Activated CD8-positive, alpha-beta T cell treated with anti-CD3 and anti-CD28 coated beads for 36 hours (primary cell): ENCODE measurements at regions of chr1 and their contacts with region 1.

Region 1: DNA sequence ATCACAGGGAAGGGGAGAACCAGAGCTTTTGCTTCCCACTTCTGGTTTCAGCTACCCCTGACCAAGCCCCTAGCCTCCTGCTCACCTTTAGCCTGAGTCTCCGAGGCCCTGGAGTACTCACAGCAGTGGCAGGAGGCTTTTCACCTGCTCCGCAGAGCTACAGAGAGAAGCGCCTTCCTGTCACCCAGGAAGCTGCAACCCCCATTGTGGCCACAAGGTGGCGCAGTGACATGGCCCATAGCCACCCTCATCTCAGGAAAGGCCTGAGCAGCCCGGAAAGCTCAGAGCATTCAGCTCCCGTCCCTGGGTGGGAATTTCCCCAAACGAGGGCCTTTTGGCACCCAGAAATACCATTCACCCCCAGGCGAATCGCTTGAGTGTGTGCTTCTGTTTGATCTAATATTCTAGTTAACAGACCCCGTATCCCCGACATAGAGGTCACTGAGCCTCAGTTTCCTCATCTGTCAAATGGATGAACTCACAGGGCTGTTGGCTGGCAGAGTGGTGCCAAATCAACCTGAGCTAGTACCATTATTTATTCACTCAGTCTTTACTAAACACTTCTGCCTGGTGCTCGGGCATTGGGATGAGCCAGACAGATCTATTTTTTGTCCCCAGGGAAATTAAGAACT is 25.3 kb downstream of the A3GALT2 start:
- DNase-seq: peak; percentile 95
- ATAC-seq: peak; percentile 95
- H3K4me3 Mint-ChIP-seq: no peak overlapping the region
- H3K27ac Mint-ChIP-seq: no peak overlapping the region
- H3K4me1 Mint-ChIP-seq: peaks cover 7% of the 10 kb centered on the region
- H3K27me3 Mint-ChIP-seq: no peaks in the 10 kb centered on the region
- CTCF ChIP-seq: peak; percentile 96

Region 2: DNA sequence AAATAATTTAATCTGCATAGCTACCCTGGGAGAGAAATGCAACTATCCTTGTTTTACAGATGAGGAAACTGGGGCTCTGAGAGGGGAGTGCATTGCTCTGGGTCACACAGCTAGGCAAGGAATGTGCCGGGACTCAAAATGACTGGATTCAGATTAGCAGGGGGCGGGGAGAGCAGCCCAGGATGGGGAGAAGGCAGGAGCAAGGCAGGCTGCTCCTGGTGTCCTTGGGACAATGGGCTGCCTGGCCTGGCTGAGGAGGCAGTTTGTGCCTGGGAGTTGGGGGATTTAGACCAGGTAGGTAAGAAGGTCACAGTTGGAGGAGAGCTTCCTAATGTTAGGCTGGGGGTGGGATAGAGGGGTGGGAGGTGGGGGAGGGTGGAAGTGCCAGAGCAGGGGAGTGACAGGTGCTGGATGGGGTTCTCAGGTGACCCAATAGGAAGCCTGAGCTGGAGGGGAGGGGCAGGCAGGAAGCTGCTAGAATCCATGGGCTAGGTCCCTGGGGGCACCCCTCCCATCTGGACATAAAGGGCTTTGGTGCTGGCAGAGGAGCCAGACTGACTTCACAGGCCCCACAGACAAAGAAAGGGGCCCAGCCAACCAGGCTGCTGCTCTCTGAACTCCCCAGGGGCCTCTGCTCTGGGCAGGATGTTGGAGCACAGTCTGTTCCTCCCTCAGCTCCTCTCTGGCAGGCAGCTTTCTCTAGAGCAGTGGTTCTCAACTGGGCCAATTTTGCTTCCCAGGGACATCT is 142.7 kb before region 1 on chr1:
- CTCF ChIA-PET with region 1: no interaction called
- POLR2A ChIA-PET with region 1: no interaction called
- intact Hi-C with region 1: no loop called
- DNase-seq: no peak
- ATAC-seq: peak; percentile 34
- H3K4me3 Mint-ChIP-seq: no peak overlapping the region
- H3K27ac Mint-ChIP-seq: peak overlapping the region; percentile 14
- H3K4me1 Mint-ChIP-seq: no peaks in the 10 kb centered on the region
- H3K27me3 Mint-ChIP-seq: no peaks in the 10 kb centered on the region
- CTCF ChIP-seq: no peak

Region 3: DNA sequence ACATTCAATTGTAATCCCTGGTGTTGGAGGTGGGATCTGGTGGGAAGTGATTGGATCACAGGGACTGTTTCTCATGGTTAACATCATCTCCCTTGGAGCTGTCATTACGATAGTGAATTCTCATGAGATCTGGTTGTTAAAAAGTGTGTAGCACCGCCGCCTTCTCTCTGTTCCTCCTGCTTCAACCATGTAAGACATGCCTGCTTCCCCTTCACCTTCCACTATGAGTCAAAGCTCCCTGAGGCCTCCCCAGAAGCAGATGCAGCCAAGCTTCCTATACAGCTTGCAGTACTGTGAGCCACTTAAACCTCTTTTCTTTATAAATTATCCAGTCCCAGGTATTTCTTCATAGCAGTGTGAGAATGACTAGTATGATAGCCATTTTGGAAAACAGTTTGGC is 83.6 kb before region 1 on chr1:
- CTCF ChIA-PET with region 1: no interaction called
- POLR2A ChIA-PET with region 1: no interaction called
- intact Hi-C with region 1: no loop called
- DNase-seq: no peak
- ATAC-seq: no peak
- H3K4me3 Mint-ChIP-seq: no peak overlapping the region
- H3K27ac Mint-ChIP-seq: no peak overlapping the region
- H3K4me1 Mint-ChIP-seq: no peaks in the 10 kb centered on the region
- H3K27me3 Mint-ChIP-seq: peaks cover 19% of the 10 kb centered on the region
- CTCF ChIP-seq: no peak

Region 4: DNA sequence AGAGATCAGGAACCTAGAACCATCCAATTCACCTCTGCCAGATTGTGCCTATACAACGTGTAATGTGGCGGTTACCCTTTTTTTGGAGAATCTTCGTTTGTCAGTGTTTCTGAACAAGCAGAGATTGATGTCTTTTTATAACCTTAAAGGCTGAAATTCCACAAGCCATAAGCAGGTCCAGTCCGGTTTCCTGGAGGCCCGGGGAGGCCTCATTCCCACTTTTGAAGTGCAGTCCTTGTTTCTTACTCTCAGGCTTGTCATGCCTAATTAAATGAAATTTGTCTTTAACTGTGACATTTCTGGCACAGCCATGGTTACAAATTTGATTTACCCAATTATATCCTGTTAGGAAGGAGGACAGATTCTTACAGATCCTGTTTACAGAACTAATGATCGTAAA is 11.5 kb before region 1 on chr1:
- CTCF ChIA-PET with region 1: interaction called, 11 read pairs
- POLR2A ChIA-PET with region 1: no interaction called
- intact Hi-C with region 1: no loop called
- DNase-seq: no peak
- ATAC-seq: no peak
- H3K4me3 Mint-ChIP-seq: no peak overlapping the region
- H3K27ac Mint-ChIP-seq: no peak overlapping the region
- H3K4me1 Mint-ChIP-seq: no peaks in the 10 kb centered on the region
- H3K27me3 Mint-ChIP-seq: no peaks in the 10 kb centered on the region
- CTCF ChIP-seq: no peak

Region 5: GRCh38 chr1:33329601-33330305 is 34.2 kb after region 1 on chr1:
- CTCF ChIA-PET with region 1: interaction called, 10 read pairs
- POLR2A ChIA-PET with region 1: no interaction called
- intact Hi-C with region 1: no loop called
- DNase-seq: no peak
- ATAC-seq: no peak
- H3K4me3 Mint-ChIP-seq: no peak overlapping the region
- H3K27ac Mint-ChIP-seq: no peak overlapping the region
- H3K4me1 Mint-ChIP-seq: no peaks in the 10 kb centered on the region
- H3K27me3 Mint-ChIP-seq: no peaks in the 10 kb centered on the region
- CTCF ChIP-seq: no peak

Region 6: GRCh38 chr1:33367485-33368405 is 72.2 kb after region 1 on chr1:
- CTCF ChIA-PET with region 1: interaction called, 64 read pairs
- POLR2A ChIA-PET with region 1: no interaction called
- intact Hi-C with region 1: loop called (anchors 2 kb)
- DNase-seq: peak; percentile 88
- ATAC-seq: peak; percentile 98
- H3K4me3 Mint-ChIP-seq: no peak overlapping the region
- H3K27ac Mint-ChIP-seq: no peak overlapping the region
- H3K4me1 Mint-ChIP-seq: peaks cover 2% of the 10 kb centered on the region
- H3K27me3 Mint-ChIP-seq: no peaks in the 10 kb centered on the region
- CTCF ChIP-seq: peak; percentile 96

Region 7: GRCh38 chr1:33441088-33441745 is 145.7 kb after region 1 on chr1:
- CTCF ChIA-PET with region 1: no interaction called
- POLR2A ChIA-PET with region 1: no interaction called
- intact Hi-C with region 1: no loop called
- DNase-seq: no peak
- ATAC-seq: no peak
- H3K4me3 Mint-ChIP-seq: no peak overlapping the region
- H3K27ac Mint-ChIP-seq: no peak overlapping the region
- H3K4me1 Mint-ChIP-seq: peaks cover 1% of the 10 kb centered on the region
- H3K27me3 Mint-ChIP-seq: peaks cover 4% of the 10 kb centered on the region
- CTCF ChIP-seq: no peak

Region 8: DNA sequence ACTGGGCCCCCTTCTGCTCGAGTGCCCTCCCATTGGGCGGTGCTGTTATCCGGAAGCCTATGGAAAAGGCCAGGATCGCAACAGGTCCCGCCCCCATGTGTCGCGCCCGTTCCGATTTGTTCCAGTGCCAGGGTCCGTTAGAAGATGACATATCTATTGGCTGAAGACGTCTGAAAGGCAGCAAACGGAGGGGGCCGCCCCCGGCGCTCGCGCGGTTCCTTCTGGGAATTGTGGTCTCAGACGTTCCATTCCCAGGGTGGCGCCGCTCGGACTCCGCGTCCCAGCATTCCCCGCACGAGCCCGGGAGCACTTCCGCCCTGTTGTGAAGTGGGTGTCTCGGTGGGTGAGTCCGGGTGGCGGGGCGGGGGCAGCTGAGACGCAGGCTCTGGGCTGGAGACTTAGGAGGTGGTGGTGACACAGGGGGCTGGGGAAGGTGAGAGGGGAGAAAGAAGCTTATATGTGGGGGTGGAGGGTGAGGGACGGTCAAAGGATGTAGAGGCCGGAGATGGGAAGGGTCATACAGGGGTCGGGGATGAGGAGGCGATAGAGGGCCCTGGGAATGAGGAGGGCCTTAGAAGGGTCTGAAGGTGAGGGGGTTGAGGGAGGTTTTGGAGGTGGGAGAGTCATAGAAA is 176.9 kb after region 1 on chr1 and contains the start of gene ZSCAN20:
- CTCF ChIA-PET with region 1: interaction called, 37 read pairs
- POLR2A ChIA-PET with region 1: no interaction called
- intact Hi-C with region 1: loop called (anchors 5 kb)
- DNase-seq: peak; percentile 96
- ATAC-seq: peak; percentile 95
- H3K4me3 Mint-ChIP-seq: peak within 1 kb of the TSS; percentile 72
- H3K27ac Mint-ChIP-seq: peak within 1 kb of the TSS; percentile 82
- H3K4me1 Mint-ChIP-seq: peaks cover 18% of the 10 kb centered on the region
- H3K27me3 Mint-ChIP-seq: no peaks in the 10 kb centered on the region
- CTCF ChIP-seq: no peak
- total RNA-seq, gene ZSCAN20: 2.6 to 3.2 TPM

Region 9: DNA sequence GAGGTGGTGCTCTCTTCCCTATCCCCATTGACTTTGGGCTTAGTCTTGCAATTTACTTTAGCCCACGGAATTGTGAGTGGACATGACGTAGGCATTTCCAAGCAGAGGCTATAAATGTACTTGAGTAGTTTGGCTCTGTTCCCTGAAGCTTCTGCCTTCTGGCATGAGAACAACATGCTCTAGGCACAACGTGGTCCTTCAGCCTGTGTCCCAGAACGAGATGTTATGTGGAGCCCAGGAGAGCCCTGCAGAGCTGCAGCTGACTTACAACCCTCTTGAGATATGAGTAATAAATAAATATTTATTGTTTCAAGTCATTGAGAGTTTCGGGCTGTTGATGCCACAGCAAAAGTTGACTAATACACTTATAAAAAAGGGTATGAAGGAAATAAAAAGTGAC is 463.1 kb after region 1 on chr1:
- CTCF ChIA-PET with region 1: no interaction called
- POLR2A ChIA-PET with region 1: no interaction called
- intact Hi-C with region 1: no loop called
- DNase-seq: no peak
- ATAC-seq: no peak
- H3K4me3 Mint-ChIP-seq: no peak overlapping the region
- H3K27ac Mint-ChIP-seq: no peak overlapping the region
- H3K4me1 Mint-ChIP-seq: no peaks in the 10 kb centered on the region
- H3K27me3 Mint-ChIP-seq: peaks cover 4% of the 10 kb centered on the region
- CTCF ChIP-seq: no peak